Activated CD4-positive, alpha-beta T cell treated with anti-CD3 and anti-CD28 coated beads for 36 hours (primary cell): ENCODE measurements at regions of chrX and their contacts with region 1.

Region 1: GRCh38 chrX:93874554-93874953 is 200.5 kb downstream of the FAM133A start:
- DNase-seq: no peak
- ATAC-seq: no peak
- H3K4me3 Mint-ChIP-seq: no peak overlapping the region
- H3K27ac Mint-ChIP-seq: no peak overlapping the region
- H3K4me1 Mint-ChIP-seq: no peaks in the 10 kb centered on the region
- H3K27me3 Mint-ChIP-seq: no peaks in the 10 kb centered on the region

Region 2: GRCh38 chrX:94058728-94059382 is 184.3 kb after region 1 on chrX:
- CTCF ChIA-PET with region 1: no interaction called
- POLR2A ChIA-PET with region 1: no interaction called
- intact Hi-C with region 1: loop called in 1 of 2 experiments (anchors 10 kb)
- DNase-seq: no peak
- ATAC-seq: no peak
- H3K4me3 Mint-ChIP-seq: no peak overlapping the region
- H3K27ac Mint-ChIP-seq: no peak overlapping the region
- H3K4me1 Mint-ChIP-seq: no peaks in the 10 kb centered on the region
- H3K27me3 Mint-ChIP-seq: no peaks in the 10 kb centered on the region

Region 3: DNA sequence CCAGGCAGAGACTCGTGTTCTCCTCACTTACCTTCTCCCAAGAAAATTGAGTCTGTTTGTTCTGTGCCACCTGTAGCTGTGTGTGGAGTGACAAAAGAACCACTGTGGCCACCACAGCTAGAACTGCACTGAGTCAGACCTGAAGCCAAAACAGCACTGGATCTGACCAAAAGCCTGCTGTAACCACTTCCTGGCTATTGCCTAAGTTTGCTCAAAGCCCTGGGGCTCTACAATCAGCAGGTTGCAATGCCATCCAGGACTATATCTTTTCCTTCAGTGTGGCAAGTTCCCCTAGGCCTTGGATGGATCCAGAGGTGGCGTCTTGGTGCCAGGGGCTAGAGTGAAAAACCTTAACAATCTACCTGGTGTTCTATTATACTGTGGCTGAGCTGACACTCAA is 248.5 kb after region 1 on chrX:
- CTCF ChIA-PET with region 1: no interaction called
- POLR2A ChIA-PET with region 1: no interaction called
- intact Hi-C with region 1: no loop called
- DNase-seq: no peak
- ATAC-seq: no peak
- H3K4me3 Mint-ChIP-seq: no peak overlapping the region
- H3K27ac Mint-ChIP-seq: no peak overlapping the region
- H3K4me1 Mint-ChIP-seq: no peaks in the 10 kb centered on the region
- H3K27me3 Mint-ChIP-seq: no peaks in the 10 kb centered on the region

Region 4: DNA sequence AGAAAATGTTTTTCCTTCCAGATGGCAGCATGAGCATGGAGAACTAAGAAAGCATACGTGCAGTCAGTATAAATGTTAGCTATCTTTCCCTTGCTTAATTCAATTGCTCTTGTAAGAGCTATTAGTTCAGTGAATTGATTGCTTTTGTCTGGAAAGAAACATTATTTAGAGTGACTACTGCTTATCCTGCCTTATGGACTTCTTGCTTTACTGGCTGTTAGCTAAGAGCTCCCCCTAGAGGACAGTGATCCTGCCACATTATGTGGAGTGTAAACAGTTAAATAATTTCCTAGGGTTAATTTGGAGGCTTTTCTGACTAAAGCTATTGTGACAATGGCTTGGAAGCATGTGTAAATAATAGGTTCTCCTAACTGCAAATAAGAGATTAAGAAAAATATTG is 1201.9 kb after region 1 on chrX:
- CTCF ChIA-PET with region 1: no interaction called
- POLR2A ChIA-PET with region 1: no interaction called
- intact Hi-C with region 1: loop called in 1 of 2 experiments (anchors 10 kb)
- DNase-seq: peak; percentile 4
- ATAC-seq: no peak
- H3K4me3 Mint-ChIP-seq: no peak overlapping the region
- H3K27ac Mint-ChIP-seq: no peak overlapping the region
- H3K4me1 Mint-ChIP-seq: no peaks in the 10 kb centered on the region
- H3K27me3 Mint-ChIP-seq: no peaks in the 10 kb centered on the region